HepG2 (cell line): ENCODE measurements at regions of chr6 and their contacts with region 1.

Region 1: DNA sequence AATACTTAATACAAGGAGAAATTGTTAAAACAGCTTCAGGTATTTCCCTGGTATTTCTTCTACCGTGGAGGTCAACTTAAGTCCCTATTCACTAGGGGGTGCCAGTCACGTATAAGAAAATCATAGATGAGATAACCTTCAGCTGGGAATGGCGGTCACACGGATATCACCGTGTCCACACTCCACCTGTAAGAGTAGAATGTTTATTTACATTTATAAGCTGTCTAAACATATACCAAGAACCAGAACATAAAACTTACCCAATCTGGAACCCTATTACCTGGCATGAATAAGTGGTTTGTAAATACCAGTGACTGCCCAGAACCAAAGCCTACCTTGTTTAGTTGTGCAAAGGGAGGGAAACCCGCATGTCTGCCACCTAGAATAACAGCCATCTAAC is 1.9 kb upstream of the ELOVL4 start:
- DNase-seq: peak; percentile 79
- ATAC-seq: peak; percentile 71
- H3K4me3 ChIP-seq: no peak overlapping the region
- H3K27ac ChIP-seq: no peak overlapping the region
- H3K4me1 ChIP-seq: peaks cover 8% of the 10 kb centered on the region; the same call in 1 of the 2 replicates
- H3K27me3 ChIP-seq: peaks cover 5 to 31% of the 10 kb centered on the region in 2 experiments; a peak in 3 of 5 replicates
- CTCF ChIP-seq: peak; percentile 82
- EP300 ChIP-seq: no peak
- POLR2A ChIP-seq: no peak
- RAD21 ChIP-seq: 0 out of 2 replicates have a peak, but pooled peaks have one; percentile 31

Region 2: GRCh38 chr6:80004173-80005072 is 55.2 kb after region 1 on chr6 and contains the start of gene TTK:
- CTCF ChIA-PET with region 1: no interaction called
- POLR2A ChIA-PET with region 1: no interaction called
- in situ Hi-C with region 1: no loop called
- intact Hi-C with region 1: loop called (anchors 1 kb)
- DNase-seq: peak; percentile 93
- ATAC-seq: peak; percentile 99
- H3K4me3 ChIP-seq: peak within 1 kb of the TSS; percentile 80 to 96 (median 91)
- H3K27ac ChIP-seq: peak within 1 kb of the TSS; percentile 85
- H3K4me1 ChIP-seq: peaks cover 26% of the 10 kb centered on the region
- H3K27me3 ChIP-seq: no peaks in the 10 kb centered on the region; a peak in 1 of 5 replicates
- CTCF ChIP-seq: no peak
- EP300 ChIP-seq: no peak
- POLR2A ChIP-seq: peak; percentile 51 to 78; a peak in 3 of 4 replicates
- RAD21 ChIP-seq: no peak
- total RNA-seq, gene TTK: 33.2 and 53.3 TPM in 2 replicates

Region 3: GRCh38 chr6:80094017-80094416 is 144.8 kb after region 1 on chr6:
- CTCF ChIA-PET with region 1: interaction called, 47 read pairs
- POLR2A ChIA-PET with region 1: no interaction called
- in situ Hi-C with region 1: loop called (anchors 5 kb)
- intact Hi-C with region 1: loop called (anchors 1 kb)
- DNase-seq: no peak
- ATAC-seq: no peak
- H3K4me3 ChIP-seq: no peak overlapping the region
- H3K27ac ChIP-seq: no peak overlapping the region
- H3K4me1 ChIP-seq: no peaks in the 10 kb centered on the region
- H3K27me3 ChIP-seq: no peaks in the 10 kb centered on the region
- CTCF ChIP-seq: peak; percentile 61
- EP300 ChIP-seq: no peak
- POLR2A ChIP-seq: no peak
- RAD21 ChIP-seq: peak; percentile 34; the same call in 1 of the 2 replicates